H1 (cell line): ENCODE measurements at regions of chr18 and their contacts with region 1.

Region 1: GRCh38 chr18:26840965-26841364 is 24.5 kb downstream of the AQP4 start:
- DNase-seq: no peak
- H3K4me3 ChIP-seq: no peak overlapping the region
- H3K27ac ChIP-seq: no peak overlapping the region
- H3K4me1 ChIP-seq: no peaks in the 10 kb centered on the region
- H3K27me3 ChIP-seq: no peaks in the 10 kb centered on the region
- CTCF ChIP-seq: peak; percentile 37 to 58 (median 41); a peak in 3 of 4 replicates
- EP300 ChIP-seq: no peak
- POLR2A ChIP-seq: no peak
- RAD21 ChIP-seq: peak; percentile 55 to 68

Region 2: GRCh38 chr18:26593365-26594320 is 247.3 kb before region 1 on chr18:
- CTCF ChIA-PET with region 1: no interaction called
- POLR2A ChIA-PET with region 1: no interaction called
- DNase-seq: no peak
- H3K4me3 ChIP-seq: no peak overlapping the region
- H3K27ac ChIP-seq: no peak overlapping the region
- H3K4me1 ChIP-seq: no peaks in the 10 kb centered on the region
- H3K27me3 ChIP-seq: no peaks in the 10 kb centered on the region
- CTCF ChIP-seq: no peak
- EP300 ChIP-seq: no peak
- POLR2A ChIP-seq: no peak
- RAD21 ChIP-seq: no peak

Region 3: DNA sequence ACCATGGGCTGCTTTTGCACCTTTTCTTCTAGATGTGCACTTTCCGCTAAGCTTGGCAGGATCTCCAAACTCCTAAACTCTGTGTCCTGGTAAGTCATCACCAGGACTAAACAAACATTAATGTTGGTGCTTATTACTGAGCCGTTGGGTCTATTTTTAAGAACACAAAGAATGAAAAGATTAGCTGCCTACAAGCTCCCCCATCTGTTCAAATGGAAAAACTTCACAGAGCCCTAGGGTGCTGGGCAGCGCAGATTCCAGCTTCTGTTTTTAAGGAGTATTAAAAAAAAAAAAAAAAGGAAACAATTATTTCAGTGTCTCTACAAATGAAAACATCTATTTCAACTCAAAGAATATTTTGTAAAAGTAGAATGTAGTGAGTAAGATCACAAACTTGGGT is 122.3 kb after region 1 on chr18:
- CTCF ChIA-PET with region 1: interaction called, 13 read pairs
- POLR2A ChIA-PET with region 1: no interaction called
- DNase-seq: no peak
- H3K4me3 ChIP-seq: no peak overlapping the region
- H3K27ac ChIP-seq: no peak overlapping the region
- H3K4me1 ChIP-seq: no peaks in the 10 kb centered on the region
- H3K27me3 ChIP-seq: no peaks in the 10 kb centered on the region
- CTCF ChIP-seq: peak in 2 of 3 experiments; percentile 24 to 25; a peak in 2 of 4 replicates
- EP300 ChIP-seq: no peak
- POLR2A ChIP-seq: no peak
- RAD21 ChIP-seq: peak; percentile 58